ENCODE measurements at regions of chr14 and their contacts with region 1.

Region 1: GRCh38 chr14:96424109-96424989 is 32.4 kb downstream of the AK7 start:
- DNase-seq: peak; percentile 74
- ATAC-seq: peak; percentile 96
- H3K4me3 ChIP-seq: peak overlapping the region; percentile 33
- H3K27ac ChIP-seq: no peak overlapping the region
- H3K4me1 ChIP-seq: peaks cover 2% of the 10 kb centered on the region; the same call in 1 of the 2 replicates
- H3K27me3 ChIP-seq: peaks cover 1% of the 10 kb centered on the region; the same call in 1 of the 2 replicates
- CTCF ChIP-seq: peak; percentile 90
- POLR2A ChIP-seq: no peak
- RAD21 ChIP-seq: peak; percentile 88

Region 2: GRCh38 chr14:95561001-95561412 is 863.3 kb before region 1 on chr14:
- CTCF ChIA-PET with region 1: no interaction called
- POLR2A ChIA-PET with region 1: no interaction called
- dilution Hi-C with region 1: no loop called
- in situ Hi-C with region 1: loop called (anchors 25 kb)
- intact Hi-C with region 1: loop called (anchors 10 kb)
- DNase-seq: peak; percentile 82
- ATAC-seq: peak; percentile 88
- H3K4me3 ChIP-seq: no peak overlapping the region
- H3K27ac ChIP-seq: no peak overlapping the region
- H3K4me1 ChIP-seq: no peaks in the 10 kb centered on the region
- H3K27me3 ChIP-seq: peaks cover 7% of the 10 kb centered on the region
- CTCF ChIP-seq: peak; percentile 98
- POLR2A ChIP-seq: no peak
- RAD21 ChIP-seq: peak; percentile 96

Region 3: GRCh38 chr14:96297000-96297399 is 127.3 kb before region 1 on chr14:
- CTCF ChIA-PET with region 1: no interaction called
- POLR2A ChIA-PET with region 1: no interaction called
- dilution Hi-C with region 1: no loop called
- in situ Hi-C with region 1: loop called (anchors 5 kb)
- intact Hi-C with region 1: loop called (anchors 1 kb)
- DNase-seq: peak; percentile 31
- ATAC-seq: peak; percentile 46; the same call in 1 of the 2 replicates
- H3K4me3 ChIP-seq: no peak overlapping the region
- H3K27ac ChIP-seq: no peak overlapping the region
- H3K4me1 ChIP-seq: peaks cover 5% of the 10 kb centered on the region; the same call in 1 of the 2 replicates
- H3K27me3 ChIP-seq: no peaks in the 10 kb centered on the region
- CTCF ChIP-seq: peak; percentile 60
- POLR2A ChIP-seq: no peak
- RAD21 ChIP-seq: peak; percentile 55

Region 4: DNA sequence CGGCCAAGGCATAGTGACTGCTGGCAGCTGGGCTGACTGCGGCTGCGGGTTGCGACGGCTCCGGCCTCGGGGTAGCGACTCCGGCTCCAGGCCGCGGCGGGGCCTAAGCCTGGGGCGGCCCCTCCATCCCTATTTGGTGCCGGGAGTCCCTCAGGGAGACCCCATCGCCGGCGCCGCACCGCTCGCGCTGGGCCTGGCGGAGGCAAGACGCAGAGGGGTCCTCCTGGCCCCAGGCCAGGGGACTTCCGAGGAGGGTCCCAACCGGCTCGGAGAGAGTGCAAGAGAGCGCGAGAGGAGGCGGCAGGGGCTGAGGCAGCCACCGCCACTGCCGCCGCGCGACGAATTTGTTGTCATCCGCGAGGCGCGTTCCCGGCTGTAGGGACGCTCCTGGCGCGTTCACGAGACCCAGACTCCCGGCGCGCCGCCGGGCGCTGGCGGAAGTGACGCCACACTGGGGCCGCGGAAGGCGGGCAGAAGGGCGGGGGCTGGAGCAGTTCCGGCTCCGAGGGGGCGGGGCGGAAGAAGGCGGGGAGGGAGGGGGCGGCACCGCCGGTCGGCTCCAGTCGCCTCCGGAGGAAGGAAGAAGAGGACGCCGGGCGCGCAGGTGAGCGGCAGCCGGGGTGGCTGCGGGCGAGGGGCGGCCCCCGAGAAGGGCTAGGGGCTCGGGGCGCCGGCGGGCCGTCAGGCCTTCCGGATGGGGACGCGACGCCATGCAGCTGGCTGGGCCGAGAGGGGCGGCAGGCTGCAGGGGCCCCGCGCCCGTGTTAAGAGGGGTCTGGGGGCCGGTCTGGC is 61.2 kb before region 1 on chr14 and contains the starts of genes ATG2B and GSKIP:
- CTCF ChIA-PET with region 1: no interaction called
- POLR2A ChIA-PET with region 1: no interaction called
- dilution Hi-C with region 1: no loop called
- in situ Hi-C with region 1: no loop called
- intact Hi-C with region 1: loop called (anchors 5 kb)
- DNase-seq: peak; percentile 85
- ATAC-seq: peak; percentile 85
- H3K4me3 ChIP-seq: peak within 1 kb of the TSS; percentile 96
- H3K27ac ChIP-seq: peak within 1 kb of the TSS; percentile 54
- H3K4me1 ChIP-seq: peaks cover 6% of the 10 kb centered on the region
- H3K27me3 ChIP-seq: no peaks in the 10 kb centered on the region
- CTCF ChIP-seq: no peak
- POLR2A ChIP-seq: peak; percentile 72
- RAD21 ChIP-seq: no peak
- total RNA-seq, gene ATG2B: 20.6 and 22.0 TPM in 2 replicates
- total RNA-seq, gene GSKIP: 22.0 and 34.7 TPM in 2 replicates

Region 5: GRCh38 chr14:96688629-96689028 is 264.3 kb after region 1 on chr14:
- CTCF ChIA-PET with region 1: no interaction called
- POLR2A ChIA-PET with region 1: no interaction called
- dilution Hi-C with region 1: no loop called
- in situ Hi-C with region 1: no loop called
- intact Hi-C with region 1: no loop called
- DNase-seq: no peak
- ATAC-seq: no peak
- H3K4me3 ChIP-seq: no peak overlapping the region
- H3K27ac ChIP-seq: no peak overlapping the region
- H3K4me1 ChIP-seq: no peaks in the 10 kb centered on the region
- H3K27me3 ChIP-seq: no peaks in the 10 kb centered on the region
- CTCF ChIP-seq: no peak
- POLR2A ChIP-seq: no peak
- RAD21 ChIP-seq: no peak